Heart left ventricle (tissue), 16 donors: ENCODE measurements at regions of chr18 and their contacts with region 1.

Region 1: GRCh38 chr18:37346048-37346447 is 219.6 kb downstream of the CELF4 start:
- DNase-seq: no peak
- ATAC-seq: no peak
- H3K4me3 ChIP-seq: no peak overlapping the region
- H3K27ac ChIP-seq: no peak overlapping the region
- H3K4me1 ChIP-seq: no peaks in the 10 kb centered on the region
- H3K27me3 ChIP-seq: peaks cover 0 to 39% (median 0%) of the 10 kb centered on the region in 9 donors
- CTCF ChIP-seq: no peak
- POLR2A ChIP-seq: no peak

Region 2: GRCh38 chr18:37243741-37244140 is 102.3 kb before region 1 on chr18:
- intact Hi-C with region 1: no loop called
- DNase-seq: no peak
- ATAC-seq: no peak
- H3K4me3 ChIP-seq: peak overlapping the region in 2 of 12 donors; percentile 11 to 19
- H3K27ac ChIP-seq: no peak overlapping the region
- H3K4me1 ChIP-seq: peaks cover 0 to 5% (median 0%) of the 10 kb centered on the region in 12 donors
- H3K27me3 ChIP-seq: peaks cover 0 to 38% (median 8%) of the 10 kb centered on the region in 9 donors
- CTCF ChIP-seq: no peak
- POLR2A ChIP-seq: no peak

Region 3: DNA sequence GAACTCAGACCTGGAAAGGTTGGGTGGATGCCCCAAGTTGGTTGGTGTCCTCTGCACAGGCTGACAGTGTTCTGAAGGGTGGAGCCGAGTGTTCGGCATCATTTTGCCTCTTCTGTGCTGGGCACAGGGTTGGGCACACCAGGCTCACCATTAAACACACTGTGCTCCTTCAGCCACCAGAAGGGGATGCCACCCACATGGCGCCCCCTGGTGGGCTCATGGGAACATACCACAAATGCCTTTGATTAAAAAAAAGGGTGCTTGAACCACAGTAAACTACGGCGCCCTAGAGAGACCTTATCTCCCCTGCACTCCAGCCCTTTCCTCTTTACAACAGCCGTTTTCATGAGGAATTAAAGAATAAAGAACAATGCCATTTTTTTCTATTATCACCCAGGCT is 130.1 kb after region 1 on chr18:
- intact Hi-C with region 1: loop called in 1 of 10 experiments (anchors 10 kb)
- DNase-seq: no peak
- ATAC-seq: peak in 1 of 4 donors; percentile 11
- H3K4me3 ChIP-seq: no peak overlapping the region
- H3K27ac ChIP-seq: no peak overlapping the region
- H3K4me1 ChIP-seq: no peaks in the 10 kb centered on the region
- H3K27me3 ChIP-seq: peaks cover 0 to 35% (median 0%) of the 10 kb centered on the region in 9 donors
- CTCF ChIP-seq: peak; percentile 29 to 57 (median 48)
- POLR2A ChIP-seq: no peak